ENCODE measurements at regions of chr10 and their contacts with region 1.

Region 1: GRCh38 chr10:68988530-68989316 is at the start of gene KIFBP:
- DNase-seq: peak; percentile 50 to 84 (median 82)
- ATAC-seq: peak; percentile 93
- H3K4me3 ChIP-seq: peak within 1 kb of the TSS; percentile 89
- H3K4me3 Mint-ChIP-seq: peak within 1 kb of the TSS; percentile 94 to 100 (median 99)
- H3K27ac ChIP-seq: peak within 1 kb of the TSS; percentile 82
- H3K27ac Mint-ChIP-seq: peak within 1 kb of the TSS; percentile 82 to 99 (median 94)
- H3K4me1 ChIP-seq: peaks cover 15 to 20% of the 10 kb centered on the region in 2 donors
- H3K4me1 Mint-ChIP-seq: peaks cover 31 to 65% (median 56%) of the 10 kb centered on the region in 7 donors
- H3K27me3 ChIP-seq: no peaks in the 10 kb centered on the region
- H3K27me3 Mint-ChIP-seq: peaks cover 0 to 2% (median 0%) of the 10 kb centered on the region in 5 donors
- total RNA-seq, gene KIFBP: 4.5 to 18.1 (median 14.0) TPM

Region 2: GRCh38 chr10:68526626-68527307 is 462.0 kb before region 1 on chr10:
- CTCF ChIA-PET with region 1: no interaction called
- POLR2A ChIA-PET with region 1: no interaction called
- intact Hi-C with region 1: loop called in 1 of 2 experiments (anchors 1 kb)
- DNase-seq: peak in 1 of 9 donors; percentile 4
- ATAC-seq: no peak
- H3K4me3 ChIP-seq: peak overlapping the region; percentile 91
- H3K4me3 Mint-ChIP-seq: peak overlapping the region; percentile 87 to 94 (median 92)
- H3K27ac ChIP-seq: peak overlapping the region; percentile 96
- H3K27ac Mint-ChIP-seq: peak overlapping the region; percentile 78 to 97 (median 95)
- H3K4me1 ChIP-seq: peaks cover 0 to 5% of the 10 kb centered on the region in 2 donors
- H3K4me1 Mint-ChIP-seq: peaks cover 0 to 20% (median 7%) of the 10 kb centered on the region in 7 donors
- H3K27me3 ChIP-seq: no peaks in the 10 kb centered on the region
- H3K27me3 Mint-ChIP-seq: no peaks in the 10 kb centered on the region

Region 3: GRCh38 chr10:68861253-68861652 is 127.5 kb before region 1 on chr10:
- CTCF ChIA-PET with region 1: no interaction called
- POLR2A ChIA-PET with region 1: no interaction called
- intact Hi-C with region 1: no loop called
- DNase-seq: no peak
- ATAC-seq: no peak
- H3K4me3 ChIP-seq: no peak overlapping the region
- H3K4me3 Mint-ChIP-seq: no peak overlapping the region
- H3K27ac ChIP-seq: no peak overlapping the region
- H3K27ac Mint-ChIP-seq: no peak overlapping the region
- H3K4me1 ChIP-seq: no peaks in the 10 kb centered on the region
- H3K4me1 Mint-ChIP-seq: peaks cover 0 to under 1% (median 0%) of the 10 kb centered on the region in 7 donors
- H3K27me3 ChIP-seq: no peaks in the 10 kb centered on the region
- H3K27me3 Mint-ChIP-seq: peaks cover 0 to 2% (median 0%) of the 10 kb centered on the region in 5 donors

Region 4: GRCh38 chr10:68963151-68963550 is 25.6 kb before region 1 on chr10:
- CTCF ChIA-PET with region 1: interaction called, 3 read pairs
- POLR2A ChIA-PET with region 1: no interaction called
- intact Hi-C with region 1: loop called in 1 of 2 experiments (anchors 2 kb)
- DNase-seq: no peak
- ATAC-seq: no peak
- H3K4me3 ChIP-seq: no peak overlapping the region
- H3K4me3 Mint-ChIP-seq: no peak overlapping the region
- H3K27ac ChIP-seq: no peak overlapping the region
- H3K27ac Mint-ChIP-seq: peak overlapping the region in 1 of 9 donors; percentile 49
- H3K4me1 ChIP-seq: peaks cover 4 to 5% of the 10 kb centered on the region in 2 donors
- H3K4me1 Mint-ChIP-seq: peaks cover 6 to 35% (median 28%) of the 10 kb centered on the region in 7 donors
- H3K27me3 ChIP-seq: no peaks in the 10 kb centered on the region
- H3K27me3 Mint-ChIP-seq: no peaks in the 10 kb centered on the region

Region 5: DNA sequence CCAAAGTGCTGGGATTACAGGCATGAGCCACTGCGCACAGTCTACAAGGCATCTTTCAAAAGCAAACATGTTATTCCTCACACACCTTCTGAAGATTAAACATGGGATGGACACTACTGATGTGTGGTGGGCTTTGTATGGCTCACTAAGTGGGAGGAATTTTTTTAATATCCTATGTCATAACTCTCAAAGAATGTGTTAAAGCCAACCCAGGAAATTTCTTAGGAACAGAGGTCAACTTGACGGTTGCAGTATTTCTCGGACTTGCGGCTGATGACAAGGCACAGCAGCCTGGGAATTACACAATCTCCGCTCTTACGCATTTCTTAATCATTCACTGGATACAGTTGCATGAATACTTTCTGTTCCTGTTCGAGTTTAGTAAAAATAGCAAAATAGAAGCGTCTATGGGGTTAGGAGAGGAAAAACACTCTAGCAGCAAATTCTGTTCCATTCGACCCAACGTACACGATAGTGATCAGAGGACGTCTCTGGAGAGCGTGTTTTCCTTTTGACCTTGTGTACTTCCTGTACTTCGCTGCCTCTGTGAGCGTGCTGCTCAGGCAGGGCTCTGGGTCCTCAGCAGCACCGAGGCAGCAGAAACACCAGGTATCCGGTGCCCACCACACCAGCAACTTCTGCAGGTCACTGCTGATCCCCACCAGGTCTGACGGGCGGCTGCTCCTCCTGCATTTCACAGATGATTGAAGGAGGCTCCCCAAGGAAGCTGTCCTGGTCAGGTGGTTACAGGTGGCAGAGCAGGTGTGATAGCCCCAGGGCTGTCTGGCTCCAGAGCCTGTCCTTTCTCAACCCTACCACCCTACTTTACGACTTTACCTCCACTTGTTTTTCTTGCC is 72.8 kb after region 1 on chr10:
- CTCF ChIA-PET with region 1: no interaction called
- POLR2A ChIA-PET with region 1: no interaction called
- intact Hi-C with region 1: no loop called
- DNase-seq: peak in 7 of 9 donors; percentile 17 to 52 (median 50)
- ATAC-seq: peak; percentile 72
- H3K4me3 ChIP-seq: peak overlapping the region; percentile 15
- H3K4me3 Mint-ChIP-seq: peak overlapping the region; percentile 73 to 90 (median 83)
- H3K27ac ChIP-seq: peak overlapping the region; percentile 50
- H3K27ac Mint-ChIP-seq: peak overlapping the region; percentile 70 to 96 (median 90)
- H3K4me1 ChIP-seq: peaks cover 25% of the 10 kb centered on the region in 2 donors
- H3K4me1 Mint-ChIP-seq: peaks cover 33 to 60% (median 38%) of the 10 kb centered on the region in 7 donors
- H3K27me3 ChIP-seq: no peaks in the 10 kb centered on the region
- H3K27me3 Mint-ChIP-seq: no peaks in the 10 kb centered on the region

Region 6: GRCh38 chr10:69087590-69088470 is 99.1 kb after region 1 on chr10 and contains the start of gene SRGN:
- CTCF ChIA-PET with region 1: interaction called, 11 read pairs
- POLR2A ChIA-PET with region 1: interaction called, 6 read pairs
- intact Hi-C with region 1: loop called (anchors 1 kb)
- DNase-seq: peak; percentile 54 to 94 (median 87)
- ATAC-seq: peak; percentile 76
- H3K4me3 ChIP-seq: peak within 1 kb of the TSS; percentile 84
- H3K4me3 Mint-ChIP-seq: peak within 1 kb of the TSS; percentile 85 to 95 (median 93)
- H3K27ac ChIP-seq: peak within 1 kb of the TSS; percentile 97
- H3K27ac Mint-ChIP-seq: peak within 1 kb of the TSS; percentile 93 to 99 (median 98)
- H3K4me1 ChIP-seq: peaks cover 28 to 46% of the 10 kb centered on the region in 2 donors
- H3K4me1 Mint-ChIP-seq: peaks cover 25 to 66% (median 58%) of the 10 kb centered on the region in 7 donors
- H3K27me3 ChIP-seq: no peaks in the 10 kb centered on the region
- H3K27me3 Mint-ChIP-seq: no peaks in the 10 kb centered on the region
- total RNA-seq, gene SRGN: 66.6 to 748 (median 227) TPM

Region 7: DNA sequence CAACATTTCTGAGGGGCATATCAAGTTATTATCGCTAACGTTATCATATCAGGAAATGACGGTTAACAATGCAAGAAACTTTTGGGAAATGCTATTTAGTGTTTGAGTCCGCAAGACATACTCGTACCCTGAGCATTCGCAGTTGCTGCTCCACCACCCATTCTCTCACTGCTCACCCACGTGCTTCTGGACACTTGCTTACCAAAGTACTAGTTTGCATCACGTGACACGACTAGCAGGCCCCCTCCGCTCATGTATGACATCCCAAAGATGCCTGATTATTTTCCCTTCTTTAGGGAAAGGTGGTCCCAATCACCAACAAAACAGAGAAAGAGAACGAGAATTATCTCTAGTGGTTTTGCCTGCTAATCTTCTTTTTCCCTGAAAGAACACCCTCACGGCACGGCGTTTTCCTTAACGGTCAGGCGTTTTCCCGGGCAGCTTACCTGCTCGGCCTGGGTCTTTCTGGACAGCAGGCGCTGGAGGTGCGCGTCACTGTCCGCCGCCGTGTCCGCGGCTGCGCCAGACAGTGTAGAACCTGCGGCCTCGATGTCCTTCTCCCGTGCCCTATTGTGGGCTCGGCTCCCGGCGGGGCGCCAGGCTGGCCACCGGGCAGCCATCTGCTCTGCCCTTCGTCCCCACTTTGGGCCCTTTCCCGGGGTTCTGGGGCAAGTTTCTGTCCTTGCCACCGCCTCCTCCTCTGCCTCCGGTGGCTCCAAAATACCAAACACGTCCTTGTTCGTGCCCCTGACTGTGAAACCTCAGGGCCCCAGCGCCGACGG is 191.2 kb after region 1 on chr10 and contains the start of gene SUPV3L1:
- CTCF ChIA-PET with region 1: no interaction called
- POLR2A ChIA-PET with region 1: interaction called, 3 read pairs
- intact Hi-C with region 1: loop called in 1 of 2 experiments (anchors 1 kb)
- DNase-seq: peak; percentile 72 to 91 (median 87)
- ATAC-seq: peak; percentile 87
- H3K4me3 ChIP-seq: peak within 1 kb of the TSS; percentile 83
- H3K4me3 Mint-ChIP-seq: peak within 1 kb of the TSS; percentile 85 to 98 (median 96)
- H3K27ac ChIP-seq: peak within 1 kb of the TSS; percentile 95
- H3K27ac Mint-ChIP-seq: peak within 1 kb of the TSS; percentile 98 to 100 (median 99)
- H3K4me1 ChIP-seq: peaks cover 12 to 15% of the 10 kb centered on the region in 2 donors
- H3K4me1 Mint-ChIP-seq: peaks cover 22 to 55% (median 38%) of the 10 kb centered on the region in 7 donors
- H3K27me3 ChIP-seq: no peaks in the 10 kb centered on the region
- H3K27me3 Mint-ChIP-seq: no peaks in the 10 kb centered on the region
- total RNA-seq, gene SUPV3L1: 39.3 to 63.2 (median 42.1) TPM

Region 8: DNA sequence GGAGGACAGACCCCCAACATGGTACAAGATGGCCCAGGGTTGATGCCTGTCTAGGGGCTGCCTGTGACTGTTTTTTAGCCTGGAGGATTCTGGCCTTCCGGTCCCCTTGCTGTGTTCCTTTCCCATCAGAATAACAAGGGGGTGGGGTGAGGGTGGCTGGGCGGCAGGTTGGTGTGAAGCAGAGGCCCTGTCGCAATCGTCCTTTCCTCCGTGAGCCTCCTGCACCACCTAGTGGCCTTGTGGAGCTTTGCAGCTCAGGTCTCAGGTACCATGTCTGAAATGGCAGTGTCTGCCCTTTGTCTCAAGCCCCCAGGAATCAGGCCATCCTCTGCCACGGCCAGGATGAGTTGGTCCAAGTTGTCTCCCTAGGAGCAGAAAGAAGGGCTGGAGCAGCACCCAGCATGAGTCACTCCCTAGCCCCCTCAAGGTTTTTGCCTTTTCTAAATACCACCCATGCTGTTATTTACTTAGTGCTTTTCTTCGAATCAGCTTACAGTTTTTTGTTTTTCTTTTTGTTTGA is 403.8 kb after region 1 on chr10:
- CTCF ChIA-PET with region 1: no interaction called
- POLR2A ChIA-PET with region 1: interaction called, 3 read pairs
- intact Hi-C with region 1: loop called (anchors 5 kb)
- DNase-seq: peak; percentile 57 to 85 (median 81)
- ATAC-seq: peak; percentile 99
- H3K4me3 ChIP-seq: no peak overlapping the region
- H3K4me3 Mint-ChIP-seq: no peak overlapping the region
- H3K27ac ChIP-seq: peak overlapping the region; percentile 44
- H3K27ac Mint-ChIP-seq: peak overlapping the region; percentile 56 to 93 (median 84)
- H3K4me1 ChIP-seq: peaks cover 4 to 6% of the 10 kb centered on the region in 2 donors
- H3K4me1 Mint-ChIP-seq: peaks cover 8 to 35% (median 20%) of the 10 kb centered on the region in 7 donors
- H3K27me3 ChIP-seq: no peaks in the 10 kb centered on the region
- H3K27me3 Mint-ChIP-seq: no peaks in the 10 kb centered on the region